ENCODE measurements at regions of chr11 and their contacts with region 1.

Region 1: GRCh38 chr11:82864268-82864667 is 36.0 kb downstream of the PRCP start:
- DNase-seq: no peak
- H3K4me3 ChIP-seq: no peak overlapping the region
- H3K27ac ChIP-seq: peak overlapping the region; percentile 18
- H3K4me1 ChIP-seq: peaks cover 40% of the 10 kb centered on the region
- H3K27me3 ChIP-seq: no peaks in the 10 kb centered on the region
- CTCF ChIP-seq: peak in 2 of 3 experiments; percentile 26 to 52
- POLR2A ChIP-seq: no peak

Region 2: DNA sequence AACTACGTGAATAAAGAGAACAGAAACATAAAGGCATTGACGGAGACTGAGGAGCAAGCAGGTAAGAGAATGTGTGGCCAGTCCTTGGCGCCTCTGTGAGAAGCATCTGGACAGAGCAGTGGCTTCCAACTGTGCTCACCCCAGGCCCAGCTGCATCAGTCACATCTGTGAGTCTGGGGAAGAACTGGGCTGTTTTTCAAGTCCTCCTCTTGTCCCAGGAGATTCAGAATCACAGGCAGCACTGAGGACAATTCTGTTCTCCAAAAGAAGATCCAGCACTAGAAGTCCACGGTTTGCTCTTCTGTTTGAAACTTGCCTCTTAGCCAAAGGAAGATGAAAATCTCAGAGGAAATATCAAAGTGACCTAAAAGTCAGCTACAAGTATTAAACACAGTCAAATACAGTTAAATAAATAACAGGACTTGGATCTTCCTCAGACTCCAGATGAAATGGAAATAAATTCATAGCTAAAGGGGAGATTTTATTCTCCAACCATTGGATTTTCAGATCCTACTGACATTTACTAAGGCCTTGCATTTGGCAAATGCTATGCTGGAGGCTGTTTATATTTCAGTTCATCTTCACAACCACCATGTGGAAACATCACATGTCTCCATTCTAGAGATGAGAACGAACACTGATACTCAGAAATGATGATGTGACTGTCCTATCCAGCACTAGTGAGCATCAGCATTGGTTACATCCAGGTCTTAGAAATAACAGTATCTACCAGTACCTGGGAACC is 144.7 kb before region 1 on chr11:
- intact Hi-C with region 1: loop called (anchors 5 kb)
- DNase-seq: no peak
- H3K4me3 ChIP-seq: no peak overlapping the region
- H3K27ac ChIP-seq: no peak overlapping the region
- H3K4me1 ChIP-seq: no peaks in the 10 kb centered on the region
- H3K27me3 ChIP-seq: no peaks in the 10 kb centered on the region
- CTCF ChIP-seq: no peak
- POLR2A ChIP-seq: no peak

Region 3: GRCh38 chr11:82842019-82842418 is 22.2 kb before region 1 on chr11:
- intact Hi-C with region 1: no loop called
- DNase-seq: no peak
- H3K4me3 ChIP-seq: no peak overlapping the region
- H3K27ac ChIP-seq: no peak overlapping the region
- H3K4me1 ChIP-seq: no peaks in the 10 kb centered on the region
- H3K27me3 ChIP-seq: no peaks in the 10 kb centered on the region
- CTCF ChIP-seq: no peak
- POLR2A ChIP-seq: no peak

Region 4: DNA sequence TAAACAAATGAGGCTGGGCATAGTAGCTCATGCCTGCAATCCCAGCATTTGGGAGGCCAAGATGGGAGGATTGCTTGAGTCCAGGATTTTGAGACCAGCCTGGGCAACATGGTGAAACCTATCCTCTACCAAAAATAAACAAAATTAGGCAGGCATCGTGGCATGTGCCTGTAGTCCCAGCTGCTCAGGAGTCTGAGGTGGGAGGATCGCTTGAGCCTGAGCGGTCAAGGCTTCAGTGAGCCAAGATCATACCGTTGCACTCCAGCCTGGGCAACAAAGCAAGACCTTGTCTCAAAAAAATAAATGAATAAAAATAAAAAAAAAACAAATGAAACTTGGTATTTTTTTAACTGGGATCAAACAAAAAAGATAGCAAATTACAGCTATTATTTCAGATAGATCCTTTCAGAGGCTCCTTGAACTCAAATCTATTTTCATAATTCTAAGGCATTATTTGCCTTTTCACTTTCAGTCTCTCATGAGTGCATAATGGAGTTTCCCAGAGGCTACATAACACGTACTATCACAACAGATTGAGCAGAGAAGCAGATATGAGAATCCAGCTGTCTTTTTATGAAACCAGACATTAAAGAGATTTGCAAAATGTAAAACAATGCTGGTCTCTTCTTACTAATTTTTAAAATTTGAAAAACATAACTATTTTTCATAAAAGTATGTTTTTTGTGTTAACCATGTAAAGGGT is 60.4 kb after region 1 on chr11:
- intact Hi-C with region 1: no loop called
- DNase-seq: no peak
- H3K4me3 ChIP-seq: no peak overlapping the region
- H3K27ac ChIP-seq: no peak overlapping the region
- H3K4me1 ChIP-seq: no peaks in the 10 kb centered on the region
- H3K27me3 ChIP-seq: no peaks in the 10 kb centered on the region
- CTCF ChIP-seq: no peak
- POLR2A ChIP-seq: no peak

Measured in vagina (tissue), 2 donors.